CD8-positive, alpha-beta memory T cell (primary cell): ENCODE measurements at regions of chr22 and their contacts with region 1.

Region 1: DNA sequence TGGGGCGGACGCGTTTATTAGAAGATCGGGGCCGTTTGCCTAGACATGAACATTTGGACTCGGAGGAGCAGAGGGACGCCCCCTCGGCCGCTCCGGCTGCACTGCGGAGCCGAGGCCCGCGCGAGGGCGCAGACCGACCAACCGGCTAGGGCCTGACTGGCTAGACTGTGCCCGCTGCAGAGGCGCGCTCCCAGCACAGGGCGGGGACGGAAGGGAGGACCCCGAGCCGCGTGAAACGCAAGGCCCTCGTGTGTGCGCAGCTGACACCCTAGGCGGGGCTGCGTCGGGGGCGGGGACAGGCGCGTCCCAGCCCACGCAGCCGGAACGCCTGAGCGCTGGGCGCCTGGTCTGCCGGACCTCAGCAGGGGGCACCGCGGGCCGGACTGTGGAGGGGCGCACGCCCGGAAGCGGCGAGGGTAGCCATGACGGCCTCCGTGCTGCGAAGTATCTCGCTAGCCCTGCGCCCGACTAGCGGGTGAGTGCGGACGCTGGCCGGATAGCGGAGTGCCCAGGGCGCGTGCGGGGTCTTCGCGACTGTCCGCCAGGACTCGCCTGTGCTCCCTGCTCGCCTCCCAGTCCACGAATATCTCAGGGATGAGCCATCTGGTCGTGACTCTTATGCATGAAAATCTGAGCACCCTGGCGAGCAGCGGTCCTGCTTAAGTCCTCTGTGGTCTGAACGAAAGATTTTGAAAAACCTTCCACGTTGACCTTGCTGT is at the start of gene MRPL40:
- DNase-seq: peak; percentile 78 to 90 (median 82)
- H3K4me3 ChIP-seq: peak within 1 kb of the TSS; percentile 95
- H3K4me3 Mint-ChIP-seq: peak within 1 kb of the TSS; percentile 85 to 99 (median 89)
- H3K27ac ChIP-seq: peak within 1 kb of the TSS; percentile 99
- H3K27ac Mint-ChIP-seq: peak within 1 kb of the TSS; percentile 87 to 99 (median 92)
- H3K4me1 ChIP-seq: peaks cover 42% of the 10 kb centered on the region
- H3K4me1 Mint-ChIP-seq: peaks cover 35 to 49% (median 47%) of the 10 kb centered on the region in 3 donors
- H3K27me3 ChIP-seq: no peaks in the 10 kb centered on the region
- H3K27me3 Mint-ChIP-seq: peaks cover 0 to 3% of the 10 kb centered on the region in 2 donors
- total RNA-seq, gene MRPL40: 47.7 to 48.6 TPM

Region 2: GRCh38 chr22:19447388-19448075 is 15.2 kb after region 1 on chr22 and contains the start of gene C22orf39:
- CTCF ChIA-PET with region 1: interaction called, 6 read pairs
- POLR2A ChIA-PET with region 1: interaction called, 24 read pairs
- DNase-seq: peak; percentile 80 to 92 (median 90)
- H3K4me3 ChIP-seq: peak within 1 kb of the TSS; percentile 77
- H3K4me3 Mint-ChIP-seq: peak within 1 kb of the TSS; percentile 90 to 96 (median 94)
- H3K27ac ChIP-seq: peak within 1 kb of the TSS; percentile 90
- H3K27ac Mint-ChIP-seq: peak within 1 kb of the TSS; percentile 80 to 99 (median 98)
- H3K4me1 ChIP-seq: peaks cover 31% of the 10 kb centered on the region
- H3K4me1 Mint-ChIP-seq: peaks cover 35 to 52% (median 47%) of the 10 kb centered on the region in 3 donors
- H3K27me3 ChIP-seq: no peaks in the 10 kb centered on the region
- H3K27me3 Mint-ChIP-seq: no peaks in the 10 kb centered on the region
- total RNA-seq, gene C22orf39: 24.4 to 27.7 TPM

Region 3: GRCh38 chr22:19479357-19480172 is 47.3 kb after region 1 on chr22 and contains the start of gene CDC45:
- CTCF ChIA-PET with region 1: interaction called, 3 read pairs
- POLR2A ChIA-PET with region 1: interaction called, 11 read pairs
- DNase-seq: peak; percentile 89 to 95 (median 94)
- H3K4me3 ChIP-seq: peak within 1 kb of the TSS; percentile 85
- H3K4me3 Mint-ChIP-seq: peak within 1 kb of the TSS; percentile 88 to 99 (median 93)
- H3K27ac ChIP-seq: peak within 1 kb of the TSS; percentile 100
- H3K27ac Mint-ChIP-seq: peak within 1 kb of the TSS; percentile 99 to 100 (median 100)
- H3K4me1 ChIP-seq: peaks cover 11% of the 10 kb centered on the region
- H3K4me1 Mint-ChIP-seq: peaks cover 29 to 41% (median 38%) of the 10 kb centered on the region in 3 donors
- H3K27me3 ChIP-seq: no peaks in the 10 kb centered on the region
- H3K27me3 Mint-ChIP-seq: no peaks in the 10 kb centered on the region
- total RNA-seq, gene CDC45: 99.0 to 101 TPM